Dorsolateral prefrontal cortex (tissue), 120 donors: ENCODE measurements at regions of chr16 and their contacts with region 1.

Region 1: DNA sequence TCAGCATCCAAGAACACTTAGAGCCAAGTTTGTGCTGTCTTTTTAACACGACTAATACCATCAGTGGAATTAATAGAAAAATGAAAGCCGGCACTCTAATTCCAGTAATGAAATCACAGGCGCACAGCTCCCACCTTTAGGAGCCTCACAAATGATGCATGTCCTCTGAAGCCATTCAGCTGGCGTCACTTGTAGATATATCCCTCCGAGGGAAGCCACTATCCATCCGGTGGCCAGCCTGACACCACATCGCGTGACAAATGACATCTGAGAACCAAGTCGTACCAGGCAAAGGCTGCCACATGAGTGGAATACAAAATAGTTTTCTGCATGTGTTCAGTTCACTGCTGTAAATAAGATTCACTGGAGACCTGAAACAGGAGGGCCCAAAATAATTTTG is 205.6 kb downstream of the GRIN2A start:
- DNase-seq: peak; percentile 23 to 91 (median 83)
- H3K4me3 ChIP-seq: peak overlapping the region in 6 of 59 donors; percentile 6 to 16 (median 11)
- H3K27ac ChIP-seq: peak overlapping the region; percentile 77 to 100 (median 94)
- H3K27me3 ChIP-seq: no peaks in the 10 kb centered on the region
- CTCF ChIP-seq: no peak

Region 2: GRCh38 chr16:10009684-10010083 is 33.1 kb after region 1 on chr16:
- intact Hi-C with region 1: loop called in 1 of 2 experiments (anchors 5 kb)
- DNase-seq: peak; percentile 38 to 85 (median 66)
- H3K4me3 ChIP-seq: peak overlapping the region in 3 of 59 donors; percentile 4 to 22 (median 9)
- H3K27ac ChIP-seq: peak overlapping the region; percentile 5 to 97 (median 90)
- H3K27me3 ChIP-seq: no peaks in the 10 kb centered on the region
- CTCF ChIP-seq: peak in 1 of 56 donors; percentile 10